Activated CD8-positive, alpha-beta T cell treated with anti-CD3 and anti-CD28 coated beads, Interleukin-2, amount 10 ng/mL, durations not matched to agents 7 days and 5 days (primary cell): ENCODE measurements at regions of chr20 and their contacts with region 1.

Region 1: DNA sequence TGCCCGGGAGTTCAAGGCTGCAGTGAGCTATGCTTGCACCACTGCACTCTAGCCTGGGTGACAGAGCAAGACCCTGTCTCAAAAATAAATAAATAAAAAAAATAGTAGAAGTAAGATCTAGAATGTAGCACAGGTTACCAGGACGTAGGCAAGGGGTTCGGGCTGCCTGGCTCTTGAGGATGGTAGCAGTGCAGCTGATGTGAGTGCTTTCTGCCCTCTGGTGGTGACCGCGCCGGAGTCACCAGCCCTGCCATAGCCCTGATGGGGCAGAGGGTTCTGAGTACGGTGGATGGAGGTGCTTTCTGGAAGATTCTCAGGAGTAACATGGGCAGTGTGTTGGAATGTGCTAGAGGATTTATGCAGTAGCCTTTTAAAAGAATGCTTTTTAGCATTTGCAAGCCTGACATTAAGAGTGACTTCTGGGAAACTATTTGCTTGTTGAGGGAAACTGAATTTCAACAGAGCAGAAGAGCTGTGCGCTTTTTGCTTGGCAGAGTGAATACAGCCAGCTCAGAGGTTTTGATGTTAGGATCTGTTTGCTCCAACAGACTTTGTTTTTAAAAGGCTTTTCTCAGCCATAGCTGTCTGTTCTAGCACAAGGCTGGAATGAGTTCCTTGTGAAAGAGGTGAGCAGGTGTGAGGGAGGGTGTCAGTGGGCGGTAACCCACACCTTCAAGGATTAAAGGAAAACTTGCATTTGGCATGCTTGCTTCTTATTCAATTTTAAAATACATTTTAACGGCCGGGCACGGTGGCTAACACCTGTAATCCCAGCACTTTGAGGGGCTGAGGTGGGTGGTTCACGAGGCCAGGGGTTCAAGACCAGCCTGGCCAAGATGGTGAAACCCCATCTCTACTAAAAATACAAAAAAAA is 65.9 kb downstream of the PTPN1 start:
- DNase-seq: peak; percentile 74
- ATAC-seq: peak; percentile 88
- H3K4me3 Mint-ChIP-seq: no peak overlapping the region
- H3K27ac Mint-ChIP-seq: peak overlapping the region; percentile 62
- H3K4me1 Mint-ChIP-seq: peaks cover 22% of the 10 kb centered on the region
- H3K27me3 Mint-ChIP-seq: no peaks in the 10 kb centered on the region

Region 2: DNA sequence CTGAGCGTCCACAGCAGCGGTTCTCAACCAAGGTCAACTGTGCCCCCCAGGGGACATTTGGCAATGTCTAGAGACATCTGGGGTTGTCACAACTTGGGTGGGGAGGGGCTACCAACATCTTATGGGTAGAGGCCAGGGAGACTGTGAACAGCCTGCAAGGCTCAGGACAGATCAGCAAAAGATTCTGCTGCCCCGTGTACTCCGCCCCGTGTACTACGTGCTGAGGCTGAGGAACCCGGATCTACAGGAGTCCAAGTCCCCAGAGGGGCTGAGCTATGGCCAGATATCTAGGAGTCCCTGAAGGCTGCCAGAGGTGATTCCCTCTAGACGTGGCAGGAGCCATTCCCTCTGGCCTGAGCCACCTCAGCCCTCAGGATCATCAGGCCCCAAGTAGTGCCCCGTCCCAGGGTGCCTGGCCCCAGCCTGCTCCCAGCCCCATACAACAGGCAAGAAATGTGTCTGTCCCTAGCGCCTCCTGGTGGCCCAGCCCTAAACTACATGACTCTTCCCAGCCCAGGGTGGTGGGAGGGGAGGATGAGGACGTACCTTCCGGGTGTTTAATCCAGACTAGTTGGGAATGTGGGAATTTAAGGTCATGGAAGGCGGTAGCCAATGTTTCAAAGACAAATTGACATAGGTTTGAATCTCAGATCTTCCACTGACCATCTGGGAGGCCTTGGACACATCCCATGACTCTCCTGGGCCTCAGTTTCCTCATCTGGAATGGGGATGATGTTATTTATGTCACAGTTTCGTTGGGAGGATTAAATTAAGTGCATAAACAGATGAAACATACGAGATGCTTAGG is 115.4 kb before region 1 on chr20:
- CTCF ChIA-PET with region 1: interaction called, 22 read pairs
- POLR2A ChIA-PET with region 1: interaction called, 3 read pairs
- DNase-seq: peak; percentile 86
- ATAC-seq: peak; percentile 82
- H3K4me3 Mint-ChIP-seq: no peak overlapping the region
- H3K27ac Mint-ChIP-seq: peak overlapping the region; percentile 39
- H3K4me1 Mint-ChIP-seq: peaks cover 41% of the 10 kb centered on the region
- H3K27me3 Mint-ChIP-seq: peaks cover 19% of the 10 kb centered on the region

Region 3: GRCh38 chr20:50478162-50479036 is 97.7 kb before region 1 on chr20:
- CTCF ChIA-PET with region 1: interaction called, 33 read pairs
- POLR2A ChIA-PET with region 1: no interaction called
- DNase-seq: peak; percentile 86
- ATAC-seq: peak; percentile 100
- H3K4me3 Mint-ChIP-seq: no peak overlapping the region
- H3K27ac Mint-ChIP-seq: no peak overlapping the region
- H3K4me1 Mint-ChIP-seq: peaks cover 36% of the 10 kb centered on the region
- H3K27me3 Mint-ChIP-seq: peaks cover 2% of the 10 kb centered on the region

Region 4: GRCh38 chr20:50491926-50492634 is 84.0 kb before region 1 on chr20:
- CTCF ChIA-PET with region 1: interaction called, 17 read pairs
- POLR2A ChIA-PET with region 1: no interaction called
- DNase-seq: no peak
- ATAC-seq: no peak
- H3K4me3 Mint-ChIP-seq: no peak overlapping the region
- H3K27ac Mint-ChIP-seq: no peak overlapping the region
- H3K4me1 Mint-ChIP-seq: peaks cover 15% of the 10 kb centered on the region
- H3K27me3 Mint-ChIP-seq: peaks cover 6% of the 10 kb centered on the region

Region 5: GRCh38 chr20:50509935-50510705 is 66.0 kb before region 1 on chr20 and contains the start of gene PTPN1:
- CTCF ChIA-PET with region 1: interaction called, 158 read pairs
- POLR2A ChIA-PET with region 1: interaction called, 3 read pairs
- DNase-seq: peak; percentile 99
- ATAC-seq: peak; percentile 94
- H3K4me3 Mint-ChIP-seq: peak within 1 kb of the TSS; percentile 96
- H3K27ac Mint-ChIP-seq: peak within 1 kb of the TSS; percentile 93
- H3K4me1 Mint-ChIP-seq: peaks cover 51% of the 10 kb centered on the region
- H3K27me3 Mint-ChIP-seq: no peaks in the 10 kb centered on the region
- total RNA-seq, gene PTPN1: 59.7 to 62.5 TPM

Region 6: DNA sequence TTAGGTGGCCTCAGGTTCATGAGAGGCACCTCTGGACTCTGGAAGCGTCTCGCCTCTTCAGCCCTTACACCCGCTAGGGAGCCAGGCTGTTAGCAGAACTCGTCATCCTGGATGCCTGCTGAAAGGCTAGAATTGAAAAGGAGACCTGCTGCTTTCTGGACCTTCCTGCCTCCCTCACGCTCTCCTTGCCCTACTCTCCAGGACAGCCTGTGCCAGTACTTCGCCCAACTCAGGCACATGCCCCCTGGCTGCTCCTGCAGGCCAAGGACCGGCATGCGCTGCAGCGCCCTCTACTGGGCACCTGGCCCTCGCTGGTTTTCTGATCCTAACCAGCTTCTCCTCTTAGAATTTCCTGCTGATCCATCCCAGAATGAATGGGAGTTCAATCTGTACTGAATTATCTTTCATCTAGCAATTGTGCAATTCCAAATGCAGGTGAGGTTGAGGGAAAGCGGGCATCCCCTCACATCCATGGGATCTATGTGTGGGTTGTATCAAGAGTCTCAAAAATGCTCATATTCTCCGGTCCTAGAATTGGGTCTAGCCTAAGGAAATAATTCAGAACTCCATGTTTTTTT is 12.0 kb after region 1 on chr20:
- CTCF ChIA-PET with region 1: interaction called, 19 read pairs
- POLR2A ChIA-PET with region 1: no interaction called
- DNase-seq: peak; percentile 80
- ATAC-seq: peak; percentile 69
- H3K4me3 Mint-ChIP-seq: no peak overlapping the region
- H3K27ac Mint-ChIP-seq: no peak overlapping the region
- H3K4me1 Mint-ChIP-seq: peaks cover 3% of the 10 kb centered on the region
- H3K27me3 Mint-ChIP-seq: no peaks in the 10 kb centered on the region

Region 7: GRCh38 chr20:50601511-50602431 is 25.7 kb after region 1 on chr20:
- CTCF ChIA-PET with region 1: no interaction called
- POLR2A ChIA-PET with region 1: no interaction called
- DNase-seq: no peak
- ATAC-seq: no peak
- H3K4me3 Mint-ChIP-seq: no peak overlapping the region
- H3K27ac Mint-ChIP-seq: no peak overlapping the region
- H3K4me1 Mint-ChIP-seq: peaks cover 8% of the 10 kb centered on the region
- H3K27me3 Mint-ChIP-seq: peaks cover 4% of the 10 kb centered on the region

Region 8: DNA sequence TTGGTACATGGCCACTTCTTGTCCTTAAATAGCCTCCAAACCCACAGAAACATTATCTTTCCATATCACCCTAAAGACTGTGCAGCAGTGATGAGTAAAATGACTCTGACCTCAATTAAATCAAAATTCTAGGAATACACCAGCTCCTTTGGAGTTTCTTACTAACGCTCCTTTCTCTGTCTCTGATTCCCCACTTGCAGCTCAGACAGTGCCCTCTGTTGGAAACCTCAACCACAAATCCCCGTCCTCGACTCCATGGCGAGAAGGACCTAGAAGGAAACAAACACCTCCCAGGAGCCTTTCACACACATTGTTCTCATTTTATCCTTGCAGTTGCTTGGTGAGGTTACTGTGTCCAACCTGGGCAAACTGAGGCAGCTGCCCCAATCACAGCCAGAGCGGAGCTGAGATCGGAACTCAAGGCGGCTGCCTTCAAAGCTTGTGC is 137.6 kb after region 1 on chr20:
- CTCF ChIA-PET with region 1: no interaction called
- POLR2A ChIA-PET with region 1: no interaction called
- DNase-seq: no peak
- ATAC-seq: no peak
- H3K4me3 Mint-ChIP-seq: no peak overlapping the region
- H3K27ac Mint-ChIP-seq: no peak overlapping the region
- H3K4me1 Mint-ChIP-seq: no peaks in the 10 kb centered on the region
- H3K27me3 Mint-ChIP-seq: peaks cover 25% of the 10 kb centered on the region